Heart left ventricle (tissue), 16 donors: ENCODE measurements at regions of chr12 and their contacts with region 1.

Region 1: DNA sequence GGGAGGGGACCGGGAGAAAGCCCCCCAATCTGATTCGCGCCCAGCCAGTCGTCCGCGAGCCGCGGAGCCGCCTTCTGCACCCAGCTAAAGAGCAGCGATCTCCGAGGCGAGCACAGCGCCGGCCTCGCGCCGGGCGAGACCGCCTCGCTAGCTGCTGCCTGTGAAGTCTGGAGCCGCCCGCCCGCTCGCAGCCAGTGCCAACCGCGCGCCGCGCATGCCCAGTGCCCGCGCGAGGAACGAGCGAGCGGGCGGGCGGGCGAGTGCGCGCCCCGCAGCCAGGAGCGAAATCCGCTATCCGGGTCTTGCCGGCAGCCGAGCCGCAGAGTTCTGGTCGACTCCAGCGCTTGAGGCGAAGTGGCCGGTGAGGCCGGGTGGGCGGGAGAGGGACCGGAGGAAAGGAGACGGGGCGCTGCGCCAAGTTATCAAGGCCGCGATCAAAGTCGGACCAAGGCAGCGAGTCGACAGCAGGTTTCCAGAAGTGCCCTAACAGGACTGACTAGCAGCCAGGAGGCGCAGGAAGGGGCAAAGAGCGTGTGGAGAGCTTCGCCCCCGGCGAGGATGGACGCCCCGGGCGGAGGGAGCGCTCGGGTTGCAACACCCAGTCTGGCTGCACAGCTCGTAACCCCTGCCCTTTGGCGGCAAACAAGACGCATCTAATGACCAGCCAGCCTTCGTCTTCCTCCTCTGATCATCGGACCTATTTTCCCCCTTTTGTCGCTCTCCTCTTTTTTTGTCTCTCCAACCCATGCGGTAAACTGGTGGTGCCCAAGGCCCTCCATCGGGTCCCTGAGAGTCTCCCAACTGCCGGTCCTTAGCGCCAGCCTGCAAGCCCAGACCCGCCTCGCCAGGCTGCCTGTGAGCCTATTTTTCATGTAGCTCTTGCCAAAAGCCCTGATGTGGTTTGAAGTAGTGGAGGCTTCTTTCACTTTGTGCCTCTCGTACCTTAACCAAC is at the start of gene EPS8:
- DNase-seq: peak; percentile 90 to 96 (median 93)
- ATAC-seq: peak; percentile 83 to 98 (median 94)
- H3K4me3 ChIP-seq: peak within 1 kb of the TSS; percentile 66 to 92 (median 84)
- H3K27ac ChIP-seq: peak within 1 kb of the TSS; percentile 80 to 94 (median 89)
- H3K4me1 ChIP-seq: peaks cover 0 to 13% (median 0%) of the 10 kb centered on the region in 12 donors
- H3K27me3 ChIP-seq: no peaks in the 10 kb centered on the region
- CTCF ChIP-seq: peak in 3 of 12 donors; percentile 4 to 33 (median 26)
- POLR2A ChIP-seq: peak in 1 of 2 donors; percentile 90
- total RNA-seq, gene EPS8: 11.7 to 56.0 (median 20.9) TPM

Region 2: GRCh38 chr12:15599266-15600037 is 190.0 kb before region 1 on chr12:
- intact Hi-C with region 1: loop called in 6 of 10 experiments (anchors 5 to 10 kb)
- DNase-seq: peak in 4 of 5 donors; percentile 34 to 65 (median 47)
- ATAC-seq: peak; percentile 69 to 93 (median 88)
- H3K4me3 ChIP-seq: no peak overlapping the region
- H3K27ac ChIP-seq: peak overlapping the region in 8 of 12 donors; percentile 9 to 57 (median 28)
- H3K4me1 ChIP-seq: peaks cover 0 to 45% (median 29%) of the 10 kb centered on the region in 12 donors
- H3K27me3 ChIP-seq: no peaks in the 10 kb centered on the region
- CTCF ChIP-seq: no peak
- POLR2A ChIP-seq: no peak

Region 3: DNA sequence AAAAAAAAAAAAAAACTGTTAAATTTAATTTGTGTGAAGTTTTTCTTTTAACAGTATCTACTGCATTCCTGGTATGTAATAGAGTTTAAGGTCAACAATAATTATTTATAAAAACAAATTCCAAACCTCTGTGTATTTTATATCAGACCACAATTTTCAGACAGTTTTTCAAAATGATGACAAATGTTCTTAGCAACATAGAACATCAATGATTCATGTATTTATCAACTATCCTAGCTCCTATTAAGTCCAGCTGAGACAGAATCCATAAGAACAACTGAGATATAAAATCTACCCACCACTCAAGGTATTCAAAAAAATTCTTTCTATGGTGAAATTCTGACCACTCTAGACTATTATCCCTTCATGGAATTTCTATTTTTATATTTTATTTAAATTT is 144.8 kb before region 1 on chr12:
- intact Hi-C with region 1: loop called in 2 of 10 experiments (anchors 10 kb)
- DNase-seq: no peak
- ATAC-seq: no peak
- H3K4me3 ChIP-seq: no peak overlapping the region
- H3K27ac ChIP-seq: no peak overlapping the region
- H3K4me1 ChIP-seq: peaks cover 0 to 1% (median 0%) of the 10 kb centered on the region in 12 donors
- H3K27me3 ChIP-seq: no peaks in the 10 kb centered on the region
- CTCF ChIP-seq: no peak
- POLR2A ChIP-seq: no peak

Region 4: DNA sequence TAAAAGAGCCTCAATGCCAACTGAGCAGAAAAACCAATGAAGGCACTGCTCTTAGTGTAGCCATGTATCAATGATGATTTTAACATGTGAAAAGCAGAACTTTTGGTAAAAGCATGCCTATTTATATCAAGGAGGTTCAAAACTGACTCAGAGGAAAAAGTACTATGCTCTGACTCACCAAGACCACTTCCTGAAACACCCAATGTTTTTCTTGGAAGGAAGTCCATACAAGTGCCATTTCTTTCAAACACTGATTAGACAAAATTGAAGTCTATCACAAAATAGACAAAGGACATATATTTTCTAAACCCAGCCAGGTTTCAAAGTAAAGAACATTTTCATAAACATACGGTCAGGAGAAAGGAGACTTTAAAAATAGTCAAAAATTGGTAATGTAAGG is 88.9 kb before region 1 on chr12:
- intact Hi-C with region 1: loop called in 1 of 10 experiments (anchors 1 kb)
- DNase-seq: no peak
- ATAC-seq: peak; percentile 63 to 91 (median 87)
- H3K4me3 ChIP-seq: no peak overlapping the region
- H3K27ac ChIP-seq: peak overlapping the region; percentile 35 to 89 (median 68)
- H3K4me1 ChIP-seq: peaks cover 0 to 73% (median 38%) of the 10 kb centered on the region in 12 donors
- H3K27me3 ChIP-seq: no peaks in the 10 kb centered on the region
- CTCF ChIP-seq: no peak
- POLR2A ChIP-seq: no peak

Region 5: DNA sequence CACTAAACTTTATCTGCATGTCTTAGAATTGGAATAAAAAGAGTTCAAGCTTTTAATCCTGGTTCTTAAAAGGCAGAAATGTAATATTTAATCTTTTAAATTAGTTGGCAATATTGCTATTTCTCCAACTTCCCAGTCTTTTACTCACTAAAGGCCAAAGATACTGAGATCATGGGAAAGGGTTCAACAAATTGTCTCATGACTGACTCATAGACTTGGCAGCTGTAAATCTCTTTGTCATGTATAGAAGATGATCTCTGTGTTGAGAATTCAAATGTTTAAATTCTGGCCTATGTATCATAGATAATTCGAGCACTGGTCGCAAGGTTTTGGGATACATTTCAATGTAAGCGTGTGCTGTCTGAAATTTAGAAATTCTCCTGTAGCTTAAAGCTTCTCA is 52.6 kb after region 1 on chr12:
- intact Hi-C with region 1: loop called in 2 of 10 experiments (anchors 5 to 10 kb)
- DNase-seq: no peak
- ATAC-seq: peak in 1 of 4 donors; percentile 59
- H3K4me3 ChIP-seq: no peak overlapping the region
- H3K27ac ChIP-seq: peak overlapping the region in 3 of 12 donors; percentile 1 to 40 (median 4)
- H3K4me1 ChIP-seq: peaks cover 0 to 30% (median 2%) of the 10 kb centered on the region in 12 donors
- H3K27me3 ChIP-seq: no peaks in the 10 kb centered on the region
- CTCF ChIP-seq: no peak
- POLR2A ChIP-seq: no peak

Region 6: DNA sequence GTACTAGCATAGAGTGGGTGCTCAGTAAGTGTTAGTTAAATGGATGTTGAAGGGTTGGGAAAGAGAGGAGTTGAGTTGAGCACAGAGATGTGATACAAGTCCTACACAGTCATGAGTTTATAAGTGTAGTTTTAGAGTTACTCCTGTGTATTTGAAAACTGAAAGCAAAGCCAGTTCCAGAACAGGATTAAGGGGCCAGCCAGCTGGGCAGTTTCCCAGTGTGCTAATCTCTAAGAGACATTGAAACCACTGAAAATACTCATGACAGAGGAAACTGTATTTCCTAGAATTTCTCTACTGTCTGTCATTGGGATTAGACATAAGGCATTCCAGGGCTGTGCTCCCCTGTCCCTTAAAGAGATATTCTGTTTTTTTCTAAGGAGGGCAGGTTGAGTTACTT is 222.6 kb after region 1 on chr12:
- intact Hi-C with region 1: no loop called
- DNase-seq: peak in 4 of 5 donors; percentile 44 to 67 (median 56)
- ATAC-seq: peak; percentile 77 to 86 (median 82)
- H3K4me3 ChIP-seq: no peak overlapping the region
- H3K27ac ChIP-seq: peak overlapping the region in 4 of 12 donors; percentile 3 to 56 (median 16)
- H3K4me1 ChIP-seq: peaks cover 0 to 18% (median 11%) of the 10 kb centered on the region in 12 donors
- H3K27me3 ChIP-seq: no peaks in the 10 kb centered on the region
- CTCF ChIP-seq: no peak
- POLR2A ChIP-seq: no peak